Colonic mucosa (tissue), 4 donors: ENCODE measurements at regions of chr6 and their contacts with region 1.

Region 1: GRCh38 chr6:17599885-17600526 is at the start of gene FAM8A1:
- DNase-seq: peak; percentile 99
- H3K4me3 ChIP-seq: peak within 1 kb of the TSS; percentile 94
- H3K27ac ChIP-seq: peak within 1 kb of the TSS; percentile 96
- H3K4me1 ChIP-seq: peaks cover 17% of the 10 kb centered on the region
- H3K27me3 ChIP-seq: no peaks in the 10 kb centered on the region
- CTCF ChIP-seq: peak; percentile 32
- total RNA-seq, gene FAM8A1: 23.6 to 47.9 TPM

Region 2: DNA sequence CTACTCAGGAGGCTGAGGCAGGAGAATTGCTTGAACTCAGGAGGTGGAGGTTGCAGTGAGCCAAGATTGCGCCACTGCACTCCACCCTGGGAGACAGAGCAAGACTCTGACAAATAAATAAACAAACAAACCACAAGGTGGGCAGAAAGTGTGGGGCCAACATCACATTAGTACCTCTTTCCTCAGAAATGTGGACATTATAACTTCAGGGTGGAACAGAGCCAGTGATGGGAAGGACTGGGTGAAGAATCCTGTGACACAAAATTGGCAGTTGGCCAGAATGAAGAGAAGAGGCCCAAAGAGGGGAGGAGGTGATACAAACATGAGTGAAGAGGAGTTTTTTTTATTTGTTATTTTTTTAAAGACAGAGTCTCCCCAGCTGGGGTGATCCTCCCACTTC is 56.1 kb after region 1 on chr6:
- intact Hi-C with region 1: loop called (anchors 10 kb)
- DNase-seq: no peak
- H3K4me3 ChIP-seq: no peak overlapping the region
- H3K27ac ChIP-seq: no peak overlapping the region
- H3K4me1 ChIP-seq: peaks cover under 1% of the 10 kb centered on the region
- H3K27me3 ChIP-seq: no peaks in the 10 kb centered on the region
- CTCF ChIP-seq: no peak

Region 3: GRCh38 chr6:17706580-17707370 is 106.8 kb after region 1 on chr6 and contains the start of gene NUP153:
- intact Hi-C with region 1: loop called (anchors 10 kb)
- DNase-seq: peak; percentile 100
- H3K4me3 ChIP-seq: peak within 1 kb of the TSS; percentile 85
- H3K27ac ChIP-seq: peak within 1 kb of the TSS; percentile 96
- H3K4me1 ChIP-seq: peaks cover 15% of the 10 kb centered on the region
- H3K27me3 ChIP-seq: no peaks in the 10 kb centered on the region
- CTCF ChIP-seq: no peak
- total RNA-seq, gene NUP153: 29.8 to 31.7 TPM